CD8-positive, alpha-beta T cell (primary cell): ENCODE measurements at regions of chr6 and their contacts with region 1.

Region 1: DNA sequence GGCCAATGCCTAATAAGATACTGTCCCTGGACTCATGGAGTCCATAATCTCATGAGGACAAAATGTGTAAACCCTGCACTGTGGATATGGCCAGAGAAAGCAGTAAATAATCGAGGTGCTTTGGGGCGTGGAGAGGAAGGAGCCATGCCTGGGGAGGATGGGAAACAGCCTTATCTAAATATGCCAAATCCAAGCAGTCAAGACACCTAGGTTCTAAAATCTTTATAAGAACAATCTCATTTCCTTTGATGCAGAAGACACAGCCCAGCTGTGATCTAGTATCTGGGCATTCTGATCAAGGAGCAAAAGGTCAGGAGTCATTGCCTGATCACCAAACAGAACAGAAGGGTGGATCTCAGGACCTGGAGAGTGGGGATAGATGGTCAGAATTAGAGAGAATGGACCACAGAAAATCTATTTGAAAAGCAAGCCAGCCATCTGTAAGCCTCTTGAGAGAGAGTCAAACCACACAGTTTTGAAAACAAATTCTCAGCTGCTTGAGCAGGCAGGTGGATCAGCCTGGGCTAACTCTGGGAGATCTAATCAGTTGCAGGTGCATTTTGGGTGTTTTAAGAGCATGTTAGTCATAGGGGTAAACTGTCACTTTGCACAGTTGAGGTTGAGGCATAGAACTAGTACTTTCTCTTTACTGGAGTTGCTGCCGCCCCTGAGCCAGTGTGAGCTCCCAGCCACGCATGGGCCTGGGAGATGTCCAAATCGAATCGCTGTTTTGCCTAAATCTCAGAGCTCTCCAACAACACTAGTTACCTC is 130.8 kb upstream of the TNFAIP3 start:
- DNase-seq: peak in 6 of 9 experiments; percentile 11 to 55 (median 42)
- ATAC-seq: peak; percentile 87
- H3K4me3 ChIP-seq: no peak overlapping the region
- H3K4me3 Mint-ChIP-seq: no peak overlapping the region
- H3K27ac ChIP-seq: no peak overlapping the region
- H3K27ac Mint-ChIP-seq: peak overlapping the region; percentile 79
- H3K4me1 ChIP-seq: no peaks in the 10 kb centered on the region
- H3K4me1 Mint-ChIP-seq: peaks cover 11% of the 10 kb centered on the region
- H3K27me3 ChIP-seq: no peaks in the 10 kb centered on the region
- H3K27me3 Mint-ChIP-seq: no peaks in the 10 kb centered on the region
- CTCF ChIP-seq: no peak

Region 2: GRCh38 chr6:137248702-137249101 is 487.5 kb before region 1 on chr6:
- CTCF ChIA-PET with region 1: no interaction called
- POLR2A ChIA-PET with region 1: no interaction called
- intact Hi-C with region 1: no loop called
- DNase-seq: no peak
- ATAC-seq: no peak
- H3K4me3 ChIP-seq: no peak overlapping the region
- H3K4me3 Mint-ChIP-seq: no peak overlapping the region
- H3K27ac ChIP-seq: no peak overlapping the region
- H3K27ac Mint-ChIP-seq: no peak overlapping the region
- H3K4me1 ChIP-seq: no peaks in the 10 kb centered on the region
- H3K4me1 Mint-ChIP-seq: no peaks in the 10 kb centered on the region
- H3K27me3 ChIP-seq: no peaks in the 10 kb centered on the region
- H3K27me3 Mint-ChIP-seq: no peaks in the 10 kb centered on the region
- CTCF ChIP-seq: no peak

Region 3: DNA sequence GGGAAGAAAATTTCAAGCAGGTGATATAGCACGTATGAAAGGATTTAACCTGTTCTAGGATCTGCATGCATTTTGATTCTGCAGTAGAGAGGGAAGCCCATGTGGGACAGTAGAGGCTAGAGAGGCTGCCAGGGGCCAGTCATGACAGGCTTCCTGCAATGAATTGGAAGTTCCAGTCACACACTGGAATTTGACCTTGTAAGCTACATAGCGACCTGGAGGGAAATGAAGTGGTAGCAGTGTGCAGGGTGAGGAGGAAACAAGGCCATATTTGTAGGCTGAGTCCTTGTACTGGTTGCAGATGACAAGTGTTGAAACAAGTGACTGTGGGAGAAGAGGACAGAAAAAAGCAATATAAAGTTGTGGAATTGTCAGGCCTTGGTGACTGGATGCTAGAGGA is 183.4 kb before region 1 on chr6:
- CTCF ChIA-PET with region 1: no interaction called
- POLR2A ChIA-PET with region 1: no interaction called
- intact Hi-C with region 1: no loop called
- DNase-seq: no peak
- ATAC-seq: no peak
- H3K4me3 ChIP-seq: no peak overlapping the region
- H3K4me3 Mint-ChIP-seq: no peak overlapping the region
- H3K27ac ChIP-seq: no peak overlapping the region
- H3K27ac Mint-ChIP-seq: no peak overlapping the region
- H3K4me1 ChIP-seq: no peaks in the 10 kb centered on the region
- H3K4me1 Mint-ChIP-seq: peaks cover 7% of the 10 kb centered on the region
- H3K27me3 ChIP-seq: no peaks in the 10 kb centered on the region
- H3K27me3 Mint-ChIP-seq: no peaks in the 10 kb centered on the region
- CTCF ChIP-seq: no peak

Region 4: GRCh38 chr6:137722749-137723272 is 13.4 kb before region 1 on chr6:
- CTCF ChIA-PET with region 1: interaction called, 3 read pairs
- POLR2A ChIA-PET with region 1: interaction called, 4 read pairs
- intact Hi-C with region 1: loop called in 1 of 2 experiments (anchors 2 kb)
- DNase-seq: peak in 3 of 9 experiments; percentile 29 to 70 (median 53)
- ATAC-seq: peak; percentile 58
- H3K4me3 ChIP-seq: no peak overlapping the region
- H3K4me3 Mint-ChIP-seq: no peak overlapping the region
- H3K27ac ChIP-seq: no peak overlapping the region
- H3K27ac Mint-ChIP-seq: no peak overlapping the region
- H3K4me1 ChIP-seq: no peaks in the 10 kb centered on the region
- H3K4me1 Mint-ChIP-seq: peaks cover 15% of the 10 kb centered on the region
- H3K27me3 ChIP-seq: no peaks in the 10 kb centered on the region
- H3K27me3 Mint-ChIP-seq: peaks cover 3% of the 10 kb centered on the region
- CTCF ChIP-seq: no peak